ENCODE measurements at regions of chr7 and their contacts with region 1.

Region 1: GRCh38 chr7:65981965-65982792 is at the start of gene GUSB:
- DNase-seq: peak; percentile 80 to 92 (median 88)
- ATAC-seq: peak; percentile 83
- H3K4me3 ChIP-seq: peak within 1 kb of the TSS; percentile 83
- H3K4me3 Mint-ChIP-seq: peak within 1 kb of the TSS; percentile 92
- H3K27ac ChIP-seq: peak within 1 kb of the TSS in 1 of 2 donors; percentile 68
- H3K27ac Mint-ChIP-seq: peak within 1 kb of the TSS; percentile 84
- H3K4me1 ChIP-seq: peaks cover 31% of the 10 kb centered on the region
- H3K4me1 Mint-ChIP-seq: peaks cover 9% of the 10 kb centered on the region
- H3K27me3 ChIP-seq: no peaks in the 10 kb centered on the region
- H3K27me3 Mint-ChIP-seq: no peaks in the 10 kb centered on the region
- CTCF ChIP-seq: no peak
- total RNA-seq, gene GUSB: 42.9 to 49.7 TPM

Region 2: DNA sequence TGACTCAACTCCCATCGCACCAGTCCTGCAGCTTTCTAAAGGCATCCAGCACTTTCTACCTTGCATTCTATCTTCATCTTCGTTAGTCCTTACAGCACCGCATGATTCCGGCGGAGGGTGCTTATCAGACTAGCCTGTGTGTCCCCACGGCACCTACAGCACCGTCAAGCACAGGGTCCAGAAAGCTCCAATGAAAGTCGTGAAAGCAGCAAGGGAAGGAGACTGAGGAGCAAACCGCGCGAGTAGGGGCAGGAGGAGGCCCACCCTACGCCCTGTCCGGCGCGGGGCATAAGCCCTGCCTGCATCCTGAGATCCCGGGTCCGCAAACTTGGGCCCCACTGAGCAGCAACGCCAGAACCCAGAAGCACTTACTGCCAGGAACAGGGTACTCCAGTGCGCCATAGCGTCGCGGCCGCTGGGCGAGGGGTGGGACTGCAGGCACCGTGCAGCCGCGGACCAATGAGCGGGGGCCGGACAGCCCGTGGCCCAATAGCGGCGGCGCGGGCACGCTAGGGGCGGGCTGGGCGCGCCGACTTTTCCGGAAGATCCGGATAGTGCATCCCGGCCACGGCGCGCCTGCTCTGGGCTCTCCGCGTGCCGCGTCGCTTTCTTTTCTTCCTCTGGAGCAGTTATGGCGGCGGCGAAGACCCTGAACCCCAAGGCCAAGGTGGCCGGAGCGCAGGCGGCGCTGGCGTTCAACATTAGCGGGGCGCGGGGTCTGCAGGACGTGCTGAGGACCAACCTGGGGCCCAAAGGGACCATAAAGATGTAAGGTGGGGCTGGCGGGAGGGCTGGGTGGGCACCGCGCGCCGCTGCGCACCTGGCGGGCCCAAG is 231.5 kb before region 1 on chr7:
- CTCF ChIA-PET with region 1: no interaction called
- POLR2A ChIA-PET with region 1: no interaction called
- intact Hi-C with region 1: loop called in 1 of 2 experiments (anchors 2 kb)
- DNase-seq: peak; percentile 70 to 92 (median 84)
- ATAC-seq: peak; percentile 96
- H3K4me3 ChIP-seq: peak overlapping the region; percentile 98
- H3K4me3 Mint-ChIP-seq: peak overlapping the region; percentile 99
- H3K27ac ChIP-seq: peak overlapping the region; percentile 56 to 69
- H3K27ac Mint-ChIP-seq: peak overlapping the region; percentile 96
- H3K4me1 ChIP-seq: peaks cover 25% of the 10 kb centered on the region
- H3K4me1 Mint-ChIP-seq: peaks cover 33% of the 10 kb centered on the region
- H3K27me3 ChIP-seq: no peaks in the 10 kb centered on the region
- H3K27me3 Mint-ChIP-seq: no peaks in the 10 kb centered on the region
- CTCF ChIP-seq: no peak

Region 3: DNA sequence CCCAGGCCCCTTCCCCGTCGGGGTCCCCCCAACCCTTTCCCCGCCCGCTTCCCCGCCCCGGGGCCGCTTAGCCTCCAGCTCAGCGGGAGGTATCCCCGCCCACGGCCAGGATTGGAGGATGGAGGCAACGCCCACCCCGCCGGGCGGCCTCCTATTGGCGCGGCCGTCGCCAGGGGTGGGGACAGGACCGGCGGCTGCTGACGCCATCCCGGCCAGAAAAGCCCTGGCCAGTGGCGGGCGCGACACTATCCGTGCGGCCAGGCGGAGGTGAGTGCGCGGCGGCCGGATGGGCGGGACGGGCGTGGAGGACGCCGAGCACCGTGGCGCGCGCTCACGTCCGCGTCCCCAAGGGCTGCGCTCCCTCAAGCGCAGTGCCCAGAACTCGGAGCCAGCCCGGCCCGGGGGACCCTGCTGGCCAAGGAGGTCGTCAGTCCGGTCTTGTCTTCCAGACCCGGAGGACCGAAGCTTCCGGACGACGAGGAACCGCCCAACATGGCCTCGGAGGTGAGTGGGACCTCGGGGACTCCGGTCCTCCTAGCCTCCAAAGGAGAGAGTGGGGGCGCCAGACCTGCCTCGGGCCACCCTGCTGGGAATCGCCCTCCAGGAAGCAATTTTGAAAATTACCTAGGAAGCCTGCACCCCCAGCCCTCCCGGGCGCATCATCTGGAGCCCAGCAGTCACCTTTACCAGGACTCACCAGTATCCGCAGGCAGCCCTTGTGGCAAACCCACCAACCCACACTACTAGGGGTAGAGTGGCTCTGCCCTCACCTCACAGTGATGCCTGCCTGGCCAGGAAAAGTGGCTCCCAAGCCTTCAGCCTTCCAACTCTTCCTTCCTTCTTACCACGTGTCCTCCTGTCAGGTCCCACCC is 93.6 kb after region 1 on chr7 and contains the start of gene ASL:
- CTCF ChIA-PET with region 1: no interaction called
- POLR2A ChIA-PET with region 1: no interaction called
- intact Hi-C with region 1: loop called in 1 of 2 experiments (anchors 2 kb)
- DNase-seq: peak; percentile 61 to 93 (median 78)
- ATAC-seq: peak; percentile 97
- H3K4me3 ChIP-seq: peak within 1 kb of the TSS; percentile 96
- H3K4me3 Mint-ChIP-seq: peak within 1 kb of the TSS; percentile 94
- H3K27ac ChIP-seq: peak within 1 kb of the TSS in 1 of 2 donors; percentile 13
- H3K27ac Mint-ChIP-seq: peak within 1 kb of the TSS; percentile 69
- H3K4me1 ChIP-seq: peaks cover 19% of the 10 kb centered on the region
- H3K4me1 Mint-ChIP-seq: peaks cover 22% of the 10 kb centered on the region
- H3K27me3 ChIP-seq: no peaks in the 10 kb centered on the region
- H3K27me3 Mint-ChIP-seq: no peaks in the 10 kb centered on the region
- CTCF ChIP-seq: no peak
- total RNA-seq, gene ASL: 11.2 to 12.3 TPM

Region 4: DNA sequence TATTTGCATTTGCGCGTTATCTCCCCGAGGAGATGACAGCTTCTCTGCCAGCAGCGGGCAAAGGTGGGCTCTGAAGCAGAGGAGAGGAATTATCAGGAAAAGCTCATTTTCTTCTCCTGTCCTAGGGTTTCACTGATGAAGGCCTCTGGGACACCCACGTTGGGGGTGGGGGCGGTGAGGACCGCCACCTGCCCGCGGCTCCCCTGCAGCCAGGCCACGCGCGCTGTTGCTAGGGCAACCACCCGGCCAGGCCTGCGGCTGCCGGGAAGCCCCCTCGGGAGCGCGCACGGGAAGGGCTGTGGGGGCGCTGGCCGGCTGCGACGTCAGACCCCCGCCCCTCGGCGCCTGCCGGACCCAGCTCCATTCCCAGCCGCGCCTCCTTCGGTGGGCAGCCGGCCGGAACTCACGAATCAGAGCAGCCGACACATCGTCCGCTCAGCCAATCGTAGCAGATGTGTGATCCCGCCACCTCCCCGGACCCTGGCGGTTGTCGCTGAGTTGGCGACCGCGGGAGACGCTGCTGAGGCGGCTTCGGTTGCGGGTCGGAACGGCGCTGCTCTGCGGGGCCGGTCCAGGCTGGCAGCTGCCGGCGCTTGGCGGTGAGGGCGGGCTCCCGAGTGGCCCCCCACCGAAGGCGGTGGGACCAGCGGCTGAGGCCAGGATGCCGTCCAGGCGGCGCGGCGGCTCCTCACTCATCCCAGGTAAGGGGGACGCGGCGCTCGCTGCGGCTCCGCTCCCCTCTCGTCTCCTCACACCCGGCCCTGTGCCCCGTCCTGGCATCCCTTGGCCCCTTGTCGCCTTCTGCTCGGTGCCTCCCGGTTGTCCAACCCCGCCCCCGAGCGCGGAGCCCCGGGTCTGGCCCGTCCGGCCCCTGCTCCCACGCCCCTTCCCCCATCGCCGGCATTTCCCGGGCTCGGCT is 222.9 kb after region 1 on chr7 and contains the start of gene TPST1:
- CTCF ChIA-PET with region 1: no interaction called
- POLR2A ChIA-PET with region 1: no interaction called
- intact Hi-C with region 1: loop called in 1 of 2 experiments (anchors 5 kb)
- DNase-seq: peak; percentile 60 to 88 (median 70)
- ATAC-seq: peak; percentile 94
- H3K4me3 ChIP-seq: peak within 1 kb of the TSS; percentile 56
- H3K4me3 Mint-ChIP-seq: peak within 1 kb of the TSS; percentile 92
- H3K27ac ChIP-seq: no peak within 1 kb of the TSS
- H3K27ac Mint-ChIP-seq: peak within 1 kb of the TSS; percentile 58
- H3K4me1 ChIP-seq: peaks cover 24% of the 10 kb centered on the region
- H3K4me1 Mint-ChIP-seq: peaks cover 39% of the 10 kb centered on the region
- H3K27me3 ChIP-seq: peaks cover 8 to 10% of the 10 kb centered on the region in 2 experiments
- H3K27me3 Mint-ChIP-seq: peaks cover 18% of the 10 kb centered on the region
- CTCF ChIP-seq: peak; percentile 54
- total RNA-seq, gene TPST1: 1.9 to 2.6 TPM